ENCODE measurements at regions of chr9 and their contacts with region 1.

Region 1: DNA sequence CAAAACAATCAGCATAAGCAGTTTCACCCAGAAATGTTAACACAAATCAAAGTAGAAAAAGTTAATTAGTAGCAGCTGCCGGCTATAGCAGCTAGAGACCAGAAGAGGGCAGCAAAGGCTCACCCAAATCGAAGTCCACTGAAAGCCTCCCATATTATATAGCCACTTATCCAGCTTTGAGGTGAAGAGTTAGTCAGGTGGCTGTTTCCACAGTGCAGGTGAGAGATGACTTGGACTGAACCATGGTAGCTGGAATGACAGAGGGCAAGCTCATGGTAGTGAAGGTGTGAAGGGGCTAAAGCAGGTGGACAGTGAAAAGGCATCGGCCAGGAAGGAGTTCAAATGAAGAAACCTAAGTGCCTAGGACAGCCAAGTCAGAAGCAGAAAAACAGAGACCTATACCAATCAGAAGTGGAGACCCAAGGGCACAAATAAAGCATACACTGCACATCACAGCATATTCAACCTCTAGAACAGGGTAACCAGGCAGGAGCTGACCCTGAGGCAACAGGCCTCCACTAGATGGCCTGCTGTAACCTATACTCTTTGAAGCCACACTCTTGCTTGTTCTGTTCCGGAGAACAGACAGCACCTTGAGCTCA is 7.2 kb upstream of the RNF38 start:
- DNase-seq: peak; percentile 43 to 91
- ATAC-seq: peak; percentile 93 to 98 (median 94)
- H3K4me3 ChIP-seq: no peak overlapping the region
- H3K4me3 Mint-ChIP-seq: no peak overlapping the region
- H3K27ac ChIP-seq: no peak overlapping the region
- H3K27ac Mint-ChIP-seq: peak overlapping the region; percentile 25 to 67
- H3K4me1 ChIP-seq: no peaks in the 10 kb centered on the region
- H3K4me1 Mint-ChIP-seq: peaks cover 11 to 16% of the 10 kb centered on the region in 2 donors
- H3K27me3 ChIP-seq: no peaks in the 10 kb centered on the region
- H3K27me3 Mint-ChIP-seq: no peaks in the 10 kb centered on the region
- CTCF ChIP-seq: peak; percentile 95

Region 2: GRCh38 chr9:36450110-36450732 is 43.0 kb after region 1 on chr9:
- intact Hi-C with region 1: loop called (anchors 1 kb)
- DNase-seq: peak in 1 of 2 donors; percentile 68
- ATAC-seq: peak in 1 of 3 donors; percentile 26
- H3K4me3 ChIP-seq: no peak overlapping the region
- H3K4me3 Mint-ChIP-seq: no peak overlapping the region
- H3K27ac ChIP-seq: no peak overlapping the region
- H3K27ac Mint-ChIP-seq: no peak overlapping the region
- H3K4me1 ChIP-seq: peaks cover 13% of the 10 kb centered on the region
- H3K4me1 Mint-ChIP-seq: peaks cover 20 to 24% of the 10 kb centered on the region in 2 donors
- H3K27me3 ChIP-seq: no peaks in the 10 kb centered on the region
- H3K27me3 Mint-ChIP-seq: no peaks in the 10 kb centered on the region
- CTCF ChIP-seq: peak; percentile 71

Region 3: GRCh38 chr9:36487482-36488388 is 80.5 kb after region 1 on chr9:
- intact Hi-C with region 1: loop called (anchors 5 kb)
- DNase-seq: peak; percentile 83 to 95
- ATAC-seq: peak; percentile 81 to 94 (median 85)
- H3K4me3 ChIP-seq: peak overlapping the region; percentile 88
- H3K4me3 Mint-ChIP-seq: peak overlapping the region; percentile 96
- H3K27ac ChIP-seq: peak overlapping the region; percentile 98
- H3K27ac Mint-ChIP-seq: peak overlapping the region; percentile 92 to 95
- H3K4me1 ChIP-seq: peaks cover 32% of the 10 kb centered on the region
- H3K4me1 Mint-ChIP-seq: peaks cover 36 to 55% of the 10 kb centered on the region in 2 donors
- H3K27me3 ChIP-seq: no peaks in the 10 kb centered on the region
- H3K27me3 Mint-ChIP-seq: no peaks in the 10 kb centered on the region
- CTCF ChIP-seq: no peak

Region 4: GRCh38 chr9:36560857-36561221 is 153.6 kb after region 1 on chr9:
- intact Hi-C with region 1: loop called (anchors 1 kb)
- DNase-seq: no peak
- ATAC-seq: no peak
- H3K4me3 ChIP-seq: no peak overlapping the region
- H3K4me3 Mint-ChIP-seq: no peak overlapping the region
- H3K27ac ChIP-seq: no peak overlapping the region
- H3K27ac Mint-ChIP-seq: no peak overlapping the region
- H3K4me1 ChIP-seq: no peaks in the 10 kb centered on the region
- H3K4me1 Mint-ChIP-seq: no peaks in the 10 kb centered on the region
- H3K27me3 ChIP-seq: no peaks in the 10 kb centered on the region
- H3K27me3 Mint-ChIP-seq: no peaks in the 10 kb centered on the region
- CTCF ChIP-seq: no peak

Region 5: DNA sequence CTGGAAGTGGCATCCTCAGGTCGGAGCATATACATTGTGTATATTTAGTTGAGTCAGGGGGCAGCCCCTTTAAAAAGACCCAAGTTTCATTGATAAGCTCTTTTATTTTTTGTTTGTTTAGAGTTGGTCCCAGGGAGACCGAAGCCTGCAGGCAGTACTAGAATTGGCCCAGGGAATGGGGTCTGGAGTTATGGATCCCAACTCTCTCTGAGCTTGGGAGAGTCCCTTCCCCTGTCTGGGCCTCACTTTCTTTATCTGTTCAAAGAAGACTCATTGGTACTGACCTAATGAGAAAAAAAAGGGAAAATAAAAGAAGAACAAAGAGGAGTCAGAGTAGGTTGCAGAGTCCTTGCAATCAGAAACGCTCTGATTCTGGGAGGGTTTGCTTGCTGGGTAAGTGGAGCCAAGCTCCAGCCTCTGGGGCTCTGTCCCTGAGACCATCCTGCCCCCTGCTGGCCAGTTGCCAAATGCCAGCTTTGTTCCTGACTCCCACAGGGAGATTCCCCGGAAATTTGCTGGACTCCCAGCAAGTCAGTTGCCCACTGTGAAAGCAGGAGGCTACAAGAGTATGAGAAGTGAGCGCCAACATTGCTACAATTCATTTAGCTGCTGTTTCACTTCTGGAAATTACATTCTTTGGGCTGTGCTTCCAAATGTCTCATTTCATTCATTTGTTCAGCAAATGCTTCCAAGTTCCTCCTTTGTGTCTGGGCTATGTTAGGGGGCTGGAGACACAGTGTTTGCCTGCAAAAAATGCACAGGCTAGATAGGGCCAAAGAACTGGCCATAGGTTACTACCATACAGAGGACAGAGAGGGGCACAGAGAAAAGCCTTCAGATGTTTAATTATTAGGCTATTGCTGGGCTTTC is 321.7 kb after region 1 on chr9:
- intact Hi-C with region 1: loop called (anchors 1 kb)
- DNase-seq: peak; percentile 53 to 75
- ATAC-seq: peak in 1 of 3 donors; percentile 69
- H3K4me3 ChIP-seq: no peak overlapping the region
- H3K4me3 Mint-ChIP-seq: no peak overlapping the region
- H3K27ac ChIP-seq: no peak overlapping the region
- H3K27ac Mint-ChIP-seq: no peak overlapping the region
- H3K4me1 ChIP-seq: no peaks in the 10 kb centered on the region
- H3K4me1 Mint-ChIP-seq: no peaks in the 10 kb centered on the region
- H3K27me3 ChIP-seq: no peaks in the 10 kb centered on the region
- H3K27me3 Mint-ChIP-seq: no peaks in the 10 kb centered on the region
- CTCF ChIP-seq: peak; percentile 83